ENCODE measurements at regions of chr3 and their contacts with region 1.

Region 1: GRCh38 chr3:189563866-189564563 is 67.2 kb upstream of the TP63 start:
- DNase-seq: peak; percentile 74
- H3K4me3 Mint-ChIP-seq: no peak overlapping the region
- H3K27ac Mint-ChIP-seq: no peak overlapping the region
- H3K4me1 Mint-ChIP-seq: peaks cover 12% of the 10 kb centered on the region
- H3K27me3 Mint-ChIP-seq: peaks cover 1% of the 10 kb centered on the region

Region 2: DNA sequence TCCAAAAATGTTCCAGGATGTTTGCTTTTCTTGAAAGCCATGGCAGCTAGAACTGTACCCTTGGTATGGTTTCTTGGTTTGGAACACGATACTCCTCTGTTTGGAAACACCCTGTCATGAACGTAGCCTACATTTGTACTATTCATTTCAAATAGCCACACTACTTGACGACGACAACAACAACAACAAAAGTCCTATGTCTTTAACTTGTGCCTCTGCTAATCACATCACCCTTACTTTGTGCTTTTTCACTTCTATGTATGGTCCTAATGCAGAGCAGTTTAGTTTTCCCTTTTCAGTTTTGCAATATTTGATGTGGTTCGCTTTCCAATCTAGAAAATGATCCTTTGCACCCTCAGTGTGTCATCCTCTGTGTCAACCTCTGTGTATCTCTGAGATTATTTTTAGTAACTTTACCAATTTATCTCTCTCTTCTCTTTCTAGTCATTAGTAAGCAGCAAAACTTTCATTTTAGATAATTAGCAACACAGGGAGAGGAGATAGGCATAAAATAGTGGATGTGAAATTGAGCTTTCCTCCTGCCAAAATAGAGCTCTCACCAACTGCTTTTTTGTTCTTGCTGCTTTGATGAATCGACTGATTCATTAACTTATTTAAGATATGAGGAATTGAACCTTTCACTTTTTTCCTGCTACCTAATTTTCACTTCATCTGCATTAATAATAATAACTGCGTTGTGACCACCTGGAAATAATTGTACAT is 23.1 kb after region 1 on chr3:
- CTCF ChIA-PET with region 1: no interaction called
- POLR2A ChIA-PET with region 1: no interaction called
- intact Hi-C with region 1: loop called (anchors 2 kb)
- DNase-seq: no peak
- H3K4me3 Mint-ChIP-seq: no peak overlapping the region
- H3K27ac Mint-ChIP-seq: no peak overlapping the region
- H3K4me1 Mint-ChIP-seq: peaks cover 13% of the 10 kb centered on the region
- H3K27me3 Mint-ChIP-seq: peaks cover 7% of the 10 kb centered on the region

Region 3: GRCh38 chr3:189841473-189842210 is 277.6 kb after region 1 on chr3:
- CTCF ChIA-PET with region 1: no interaction called
- POLR2A ChIA-PET with region 1: no interaction called
- intact Hi-C with region 1: loop called (anchors 5 kb)
- DNase-seq: no peak
- H3K4me3 Mint-ChIP-seq: no peak overlapping the region
- H3K27ac Mint-ChIP-seq: no peak overlapping the region
- H3K4me1 Mint-ChIP-seq: peaks cover 12% of the 10 kb centered on the region
- H3K27me3 Mint-ChIP-seq: peaks cover 3% of the 10 kb centered on the region

Region 4: DNA sequence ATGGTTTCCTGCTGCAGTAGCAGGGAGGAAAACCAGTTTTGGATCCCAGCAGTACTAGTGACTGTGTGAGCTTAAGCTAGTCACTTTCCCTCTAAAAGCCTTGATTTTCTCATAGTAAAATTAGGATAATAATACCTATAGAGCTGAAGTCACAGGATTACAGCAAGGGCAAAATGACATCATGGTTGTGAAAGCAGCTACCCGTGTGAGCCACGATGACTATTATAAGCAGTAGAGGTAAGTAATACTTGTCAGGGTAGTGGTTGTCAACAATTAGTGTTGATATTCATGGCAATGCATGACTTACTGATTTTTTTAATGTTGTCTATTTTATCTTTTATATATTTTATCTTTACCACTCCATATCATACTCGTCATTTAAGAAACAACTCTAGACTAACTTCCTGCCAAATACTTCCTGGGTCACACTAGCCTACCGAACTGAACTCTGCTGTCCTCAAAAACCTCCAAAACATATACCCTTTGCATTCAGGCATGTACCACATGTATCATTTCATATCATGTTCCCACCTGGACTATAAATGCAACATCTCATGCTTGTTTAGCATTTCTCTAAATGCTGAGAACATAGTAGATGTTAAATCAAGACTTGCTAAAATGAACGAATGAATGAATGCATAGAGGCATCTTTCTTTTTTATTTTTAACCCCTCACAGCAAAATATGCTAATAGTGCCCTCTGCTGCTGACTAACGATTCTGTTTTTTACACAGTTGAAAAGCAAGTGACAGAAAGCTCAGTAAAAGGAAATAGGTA is 384.1 kb after region 1 on chr3:
- CTCF ChIA-PET with region 1: no interaction called
- POLR2A ChIA-PET with region 1: no interaction called
- intact Hi-C with region 1: no loop called
- DNase-seq: no peak
- H3K4me3 Mint-ChIP-seq: no peak overlapping the region
- H3K27ac Mint-ChIP-seq: no peak overlapping the region
- H3K4me1 Mint-ChIP-seq: peaks cover 3% of the 10 kb centered on the region
- H3K27me3 Mint-ChIP-seq: peaks cover 11% of the 10 kb centered on the region